Caco-2 (cell line): ENCODE measurements at regions of chr19 and their contacts with region 1.

Region 1: GRCh38 chr19:47112997-47113849 is at the start of gene ZC3H4:
- DNase-seq: peak; percentile 100
- H3K4me3 ChIP-seq: peak within 1 kb of the TSS; percentile 64
- H3K4me3 Mint-ChIP-seq: peak within 1 kb of the TSS; percentile 97
- H3K27ac Mint-ChIP-seq: peak within 1 kb of the TSS; percentile 99
- H3K4me1 ChIP-seq: peaks cover 20% of the 10 kb centered on the region
- H3K4me1 Mint-ChIP-seq: peaks cover 28% of the 10 kb centered on the region
- H3K27me3 ChIP-seq: no peaks in the 10 kb centered on the region
- H3K27me3 Mint-ChIP-seq: no peaks in the 10 kb centered on the region
- CTCF ChIP-seq: peak in 1 of 2 experiments; percentile 11
- total RNA-seq, gene ZC3H4: 70.3 and 77.7 TPM in 2 replicates

Region 2: GRCh38 chr19:47047763-47048405 is 65.3 kb before region 1 on chr19:
- CTCF ChIA-PET with region 1: interaction called, 3 read pairs
- POLR2A ChIA-PET with region 1: interaction called, 24 read pairs
- intact Hi-C with region 1: loop called (anchors 1 kb)
- DNase-seq: peak; percentile 93 to 94
- H3K4me3 ChIP-seq: peak overlapping the region; percentile 80
- H3K4me3 Mint-ChIP-seq: peak overlapping the region; percentile 89
- H3K27ac Mint-ChIP-seq: peak overlapping the region; percentile 83
- H3K4me1 ChIP-seq: peaks cover 22% of the 10 kb centered on the region
- H3K4me1 Mint-ChIP-seq: peaks cover 39% of the 10 kb centered on the region
- H3K27me3 ChIP-seq: no peaks in the 10 kb centered on the region
- H3K27me3 Mint-ChIP-seq: no peaks in the 10 kb centered on the region
- CTCF ChIP-seq: no peak

Region 3: DNA sequence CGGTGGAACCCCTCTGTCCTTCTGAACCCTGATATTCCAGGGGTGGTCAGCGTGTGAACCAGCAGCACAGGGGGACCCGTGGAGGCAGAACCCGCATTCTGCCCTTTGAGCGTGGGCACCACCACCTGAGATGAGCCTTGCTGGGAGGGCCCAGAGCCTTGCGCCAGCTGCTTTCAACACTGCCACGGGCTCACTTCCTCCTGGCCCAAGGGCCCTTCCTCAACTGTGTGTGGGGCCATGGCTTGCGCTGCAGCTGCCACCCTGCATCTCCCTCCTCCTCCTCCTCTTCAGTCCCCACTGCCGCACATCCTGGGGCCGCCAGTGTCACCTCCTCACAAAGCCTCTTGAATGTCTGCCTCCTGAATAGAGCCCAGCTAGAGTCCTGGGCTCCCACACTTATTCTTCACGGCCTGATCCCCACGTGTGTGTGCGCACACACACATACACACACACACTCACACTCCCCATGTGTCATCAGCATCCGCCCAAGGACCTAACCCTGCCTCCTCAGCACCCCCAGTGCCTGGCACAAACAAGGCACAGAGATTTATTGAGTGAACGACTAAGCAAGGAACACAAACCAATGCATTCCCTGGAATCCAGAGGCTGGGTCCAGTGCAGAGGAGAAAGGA is 37.9 kb before region 1 on chr19:
- CTCF ChIA-PET with region 1: interaction called, 25 read pairs
- POLR2A ChIA-PET with region 1: interaction called, 17 read pairs
- intact Hi-C with region 1: loop called (anchors 5 kb)
- DNase-seq: no peak
- H3K4me3 ChIP-seq: no peak overlapping the region
- H3K4me3 Mint-ChIP-seq: no peak overlapping the region
- H3K27ac Mint-ChIP-seq: no peak overlapping the region
- H3K4me1 ChIP-seq: peaks cover 10% of the 10 kb centered on the region
- H3K4me1 Mint-ChIP-seq: peaks cover 3% of the 10 kb centered on the region
- H3K27me3 ChIP-seq: no peaks in the 10 kb centered on the region
- H3K27me3 Mint-ChIP-seq: no peaks in the 10 kb centered on the region
- CTCF ChIP-seq: no peak

Region 4: GRCh38 chr19:47094557-47095475 is 18.4 kb before region 1 on chr19:
- CTCF ChIA-PET with region 1: interaction called, 14 read pairs
- POLR2A ChIA-PET with region 1: interaction called, 75 read pairs
- intact Hi-C with region 1: loop called (anchors 1 kb)
- DNase-seq: peak; percentile 75 to 88
- H3K4me3 ChIP-seq: no peak overlapping the region
- H3K4me3 Mint-ChIP-seq: peak overlapping the region; percentile 41
- H3K27ac Mint-ChIP-seq: peak overlapping the region; percentile 100
- H3K4me1 ChIP-seq: peaks cover 64% of the 10 kb centered on the region
- H3K4me1 Mint-ChIP-seq: peaks cover 50% of the 10 kb centered on the region
- H3K27me3 ChIP-seq: no peaks in the 10 kb centered on the region
- H3K27me3 Mint-ChIP-seq: no peaks in the 10 kb centered on the region
- CTCF ChIP-seq: no peak

Region 5: GRCh38 chr19:47130591-47131227 is 17.5 kb after region 1 on chr19 and contains the start of gene SAE1:
- CTCF ChIA-PET with region 1: interaction called, 9 read pairs
- POLR2A ChIA-PET with region 1: interaction called, 19 read pairs
- intact Hi-C with region 1: loop called (anchors 1 kb)
- DNase-seq: peak; percentile 99
- H3K4me3 ChIP-seq: peak within 1 kb of the TSS; percentile 86
- H3K4me3 Mint-ChIP-seq: peak within 1 kb of the TSS; percentile 94
- H3K27ac Mint-ChIP-seq: peak within 1 kb of the TSS; percentile 98
- H3K4me1 ChIP-seq: peaks cover 37% of the 10 kb centered on the region
- H3K4me1 Mint-ChIP-seq: peaks cover 32% of the 10 kb centered on the region
- H3K27me3 ChIP-seq: no peaks in the 10 kb centered on the region
- H3K27me3 Mint-ChIP-seq: no peaks in the 10 kb centered on the region
- CTCF ChIP-seq: peak in 1 of 2 experiments; percentile 70
- total RNA-seq, gene SAE1: 238 and 251 TPM in 2 replicates